ENCODE measurements at regions of chr19 and their contacts with region 1.

Region 1: GRCh38 chr19:7348587-7349230 is at the start of gene ARHGEF18:
- DNase-seq: peak in 1 of 4 donors; percentile 55
- ATAC-seq: no peak
- H3K4me3 ChIP-seq: no peak within 1 kb of the TSS
- H3K27ac ChIP-seq: no peak within 1 kb of the TSS
- H3K4me1 ChIP-seq: no peaks in the 10 kb centered on the region
- H3K27me3 ChIP-seq: no peaks in the 10 kb centered on the region
- CTCF ChIP-seq: no peak
- POLR2A ChIP-seq: no peak
- total RNA-seq, gene ARHGEF18: 30.0 to 51.6 TPM

Region 2: GRCh38 chr19:7104747-7105447 is 243.8 kb before region 1 on chr19:
- intact Hi-C with region 1: loop called (anchors 5 kb)
- DNase-seq: peak in 1 of 4 donors; percentile 64
- ATAC-seq: no peak
- H3K4me3 ChIP-seq: no peak overlapping the region
- H3K27ac ChIP-seq: no peak overlapping the region
- H3K4me1 ChIP-seq: peaks cover 18% of the 10 kb centered on the region
- H3K27me3 ChIP-seq: no peaks in the 10 kb centered on the region
- CTCF ChIP-seq: no peak
- POLR2A ChIP-seq: no peak

Region 3: GRCh38 chr19:7386308-7386707 is 37.6 kb after region 1 on chr19:
- intact Hi-C with region 1: no loop called
- DNase-seq: no peak
- ATAC-seq: no peak
- H3K4me3 ChIP-seq: no peak overlapping the region
- H3K27ac ChIP-seq: no peak overlapping the region
- H3K4me1 ChIP-seq: peaks cover 33% of the 10 kb centered on the region
- H3K27me3 ChIP-seq: no peaks in the 10 kb centered on the region
- CTCF ChIP-seq: peak in 1 of 7 experiments; percentile 7
- POLR2A ChIP-seq: no peak

Region 4: DNA sequence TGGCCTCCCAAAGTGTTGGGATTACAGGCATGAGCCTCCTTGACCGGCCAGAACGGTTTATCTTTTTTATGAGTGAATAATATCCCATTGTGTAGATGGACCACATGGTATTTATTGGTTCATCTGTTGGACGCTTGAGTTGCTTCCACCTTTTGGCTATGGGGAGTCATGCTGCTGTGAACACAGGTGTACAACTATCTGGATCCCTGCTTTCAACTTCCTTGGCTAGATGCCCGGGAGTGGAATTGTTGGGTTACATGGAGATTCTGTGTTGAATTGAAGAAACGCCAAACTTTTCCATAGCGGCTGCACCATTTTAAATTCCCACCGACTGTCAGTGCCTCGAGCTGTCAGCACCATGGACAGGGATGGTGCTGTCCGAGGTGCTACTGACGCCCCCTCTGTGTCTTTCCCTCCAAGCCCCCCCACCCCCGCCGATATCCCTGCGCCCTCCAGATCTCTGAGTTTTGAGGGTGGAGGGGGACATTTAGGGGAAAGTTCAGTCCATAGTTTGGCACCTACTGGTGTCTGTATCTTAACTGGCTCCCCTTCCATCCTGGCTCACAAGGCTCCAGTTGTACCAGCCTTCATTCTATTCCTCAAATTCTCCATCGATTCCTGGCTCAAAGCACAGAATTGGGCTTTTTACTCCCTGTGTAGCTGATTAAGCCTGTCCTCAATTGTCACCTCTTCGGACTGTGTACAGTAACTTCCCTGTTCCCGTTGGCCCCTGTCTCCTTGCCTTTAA is 214.1 kb after region 1 on chr19:
- intact Hi-C with region 1: loop called (anchors 10 kb)
- DNase-seq: peak in 2 of 4 donors; percentile 15 to 27
- ATAC-seq: no peak
- H3K4me3 ChIP-seq: no peak overlapping the region
- H3K27ac ChIP-seq: no peak overlapping the region
- H3K4me1 ChIP-seq: no peaks in the 10 kb centered on the region
- H3K27me3 ChIP-seq: no peaks in the 10 kb centered on the region
- CTCF ChIP-seq: no peak
- POLR2A ChIP-seq: no peak